K562 (cell line): ENCODE measurements at regions of chrX and their contacts with region 1.

Region 1: GRCh38 chrX:47581731-47582647 is at the start of gene TIMP1:
- DNase-seq: peak; percentile 92 to 95 (median 92)
- ATAC-seq: peak; percentile 98
- H3K4me3 ChIP-seq: peak within 1 kb of the TSS; percentile 75
- H3K27ac ChIP-seq: peak within 1 kb of the TSS; percentile 91
- H3K4me1 ChIP-seq: peaks cover 23 to 32% of the 10 kb centered on the region in 2 experiments; a peak in 4 of 5 replicates
- H3K27me3 ChIP-seq: no peaks in the 10 kb centered on the region
- CTCF ChIP-seq: no peak
- EP300 ChIP-seq: no peak; the same call in 1 of the 2 replicates
- POLR2A ChIP-seq: peak; percentile 86
- RAD21 ChIP-seq: no peak
- polyA plus RNA-seq, gene TIMP1: 530 to 699 TPM

Region 2: DNA sequence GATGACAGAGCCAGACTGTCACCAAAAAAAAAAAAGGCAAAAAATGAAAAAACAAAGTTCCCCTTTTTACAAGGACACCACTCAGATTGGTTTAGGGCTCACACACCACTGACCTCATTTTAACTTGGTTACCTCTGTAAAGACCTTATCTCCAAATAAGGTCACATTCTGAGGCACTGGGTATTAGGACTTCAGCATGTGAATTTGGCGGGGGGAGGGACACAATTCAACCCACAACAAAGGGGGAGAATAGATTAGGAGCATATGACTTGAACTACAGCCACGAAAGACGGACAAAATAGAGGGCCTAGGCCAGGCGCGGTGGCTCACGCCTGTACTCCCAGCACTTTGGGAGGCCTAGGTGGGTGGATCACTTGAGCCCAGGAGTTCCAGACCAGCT is 51.9 kb before region 1 on chrX:
- CTCF ChIA-PET with region 1: no interaction called
- POLR2A ChIA-PET with region 1: no interaction called
- in situ Hi-C with region 1: no loop called
- intact Hi-C with region 1: no loop called
- DNase-seq: no peak
- ATAC-seq: no peak; the same call in 2 of the 3 replicates
- H3K4me3 ChIP-seq: no peak overlapping the region
- H3K27ac ChIP-seq: no peak overlapping the region
- H3K4me1 ChIP-seq: no peaks in the 10 kb centered on the region
- H3K27me3 ChIP-seq: no peaks in the 10 kb centered on the region
- CTCF ChIP-seq: no peak
- EP300 ChIP-seq: no peak
- POLR2A ChIP-seq: no peak
- RAD21 ChIP-seq: no peak

Region 3: DNA sequence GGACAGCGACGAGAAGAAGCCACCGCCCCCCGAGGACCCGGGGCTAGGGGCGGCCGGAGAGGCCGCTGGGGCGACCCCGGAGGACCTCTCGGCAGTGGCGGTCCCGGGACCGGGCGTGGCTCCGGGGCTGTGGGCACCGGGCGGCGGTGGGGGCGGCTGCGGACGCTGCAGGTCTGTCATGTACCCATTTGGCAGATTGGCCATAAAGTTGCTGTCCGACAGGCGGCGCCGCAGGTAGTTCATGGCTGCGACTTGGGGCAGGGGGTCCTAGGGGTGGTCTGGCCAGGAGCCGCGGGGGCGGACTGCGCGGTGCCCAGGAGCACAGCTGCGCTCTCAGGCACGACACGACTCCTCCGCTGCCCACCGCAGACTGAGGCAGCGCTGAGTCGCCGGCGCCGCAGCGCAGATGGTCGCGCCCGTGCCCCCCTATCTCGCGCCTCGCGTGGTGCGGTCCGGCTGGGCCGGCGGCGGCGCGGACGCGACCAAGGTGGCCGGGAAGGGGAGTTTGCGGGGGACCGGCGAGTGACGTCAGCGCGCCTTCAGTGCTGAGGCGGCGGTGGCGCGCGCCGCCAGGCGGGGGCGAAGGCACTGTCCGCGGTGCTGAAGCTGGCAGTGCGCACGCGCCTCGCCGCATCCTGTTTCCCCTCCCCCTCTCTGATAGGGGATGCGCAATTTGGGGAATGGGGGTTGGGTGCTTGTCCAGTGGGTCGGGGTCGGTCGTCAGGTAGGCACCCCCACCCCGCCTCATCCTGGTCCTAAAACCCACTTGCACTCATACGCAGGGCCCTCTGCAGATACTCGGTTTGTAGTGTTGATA is 37.7 kb after region 1 on chrX and contains the start of gene SYN1:
- CTCF ChIA-PET with region 1: no interaction called
- POLR2A ChIA-PET with region 1: no interaction called
- in situ Hi-C with region 1: no loop called
- intact Hi-C with region 1: loop called (anchors 5 kb)
- DNase-seq: peak; percentile 91 to 96 (median 94)
- ATAC-seq: peak; percentile 96
- H3K4me3 ChIP-seq: peak within 1 kb of the TSS; percentile 43
- H3K27ac ChIP-seq: no peak within 1 kb of the TSS
- H3K4me1 ChIP-seq: peaks cover 0 to 22% of the 10 kb centered on the region in 2 experiments; a peak in 2 of 5 replicates
- H3K27me3 ChIP-seq: peaks cover 0 to 22% of the 10 kb centered on the region in 2 experiments; a peak in 3 of 5 replicates
- CTCF ChIP-seq: peak; percentile 23 to 41 (median 31); a peak in 3 of 6 replicates
- EP300 ChIP-seq: peak; percentile 20; the same call in 1 of the 2 replicates
- POLR2A ChIP-seq: no peak
- RAD21 ChIP-seq: no peak; a peak in 2 of 4 replicates
- polyA plus RNA-seq, gene SYN1: 0.07 TPM in 1 of 2 experiments, not detected in the other